Activated CD4-positive, alpha-beta T cell treated with anti-CD3 and anti-CD28 coated beads for 36 hours (primary cell): ENCODE measurements at regions of chr3 and their contacts with region 1.

Region 1: GRCh38 chr3:50550079-50550741 is 17.3 kb downstream of the C3orf18 start:
- DNase-seq: peak; percentile 83
- ATAC-seq: peak; percentile 78
- H3K4me3 Mint-ChIP-seq: no peak overlapping the region
- H3K27ac Mint-ChIP-seq: no peak overlapping the region
- H3K4me1 Mint-ChIP-seq: no peaks in the 10 kb centered on the region
- H3K27me3 Mint-ChIP-seq: no peaks in the 10 kb centered on the region

Region 2: DNA sequence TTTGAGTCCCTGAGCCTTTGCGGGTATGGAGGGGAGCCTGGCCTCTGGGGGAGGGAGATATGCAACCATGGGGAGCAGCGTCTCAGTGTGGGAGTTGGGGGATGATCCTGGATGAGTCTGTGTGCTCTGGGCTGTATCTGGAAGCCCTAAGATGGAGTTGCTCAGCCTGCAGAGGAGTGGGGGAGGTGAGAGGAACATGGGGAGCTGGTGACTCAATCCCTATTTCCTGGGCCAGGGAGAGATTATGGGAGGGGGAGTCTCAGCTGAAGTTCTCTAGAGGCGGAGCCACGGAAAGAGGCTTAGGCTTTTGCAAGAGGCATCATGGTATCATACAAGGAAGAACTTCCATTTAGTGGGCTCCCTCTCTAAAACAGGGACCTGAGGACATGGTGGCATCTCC is 131.4 kb before region 1 on chr3:
- CTCF ChIA-PET with region 1: no interaction called
- POLR2A ChIA-PET with region 1: no interaction called
- intact Hi-C with region 1: no loop called
- DNase-seq: no peak
- ATAC-seq: no peak
- H3K4me3 Mint-ChIP-seq: no peak overlapping the region
- H3K27ac Mint-ChIP-seq: no peak overlapping the region
- H3K4me1 Mint-ChIP-seq: no peaks in the 10 kb centered on the region
- H3K27me3 Mint-ChIP-seq: no peaks in the 10 kb centered on the region

Region 3: GRCh38 chr3:50436114-50436674 is 114.0 kb before region 1 on chr3:
- CTCF ChIA-PET with region 1: interaction called, 44 read pairs
- POLR2A ChIA-PET with region 1: no interaction called
- intact Hi-C with region 1: loop called in 1 of 2 experiments (anchors 1 kb)
- DNase-seq: peak; percentile 89
- ATAC-seq: peak; percentile 98
- H3K4me3 Mint-ChIP-seq: no peak overlapping the region
- H3K27ac Mint-ChIP-seq: no peak overlapping the region
- H3K4me1 Mint-ChIP-seq: no peaks in the 10 kb centered on the region
- H3K27me3 Mint-ChIP-seq: peaks cover 3% of the 10 kb centered on the region

Region 4: DNA sequence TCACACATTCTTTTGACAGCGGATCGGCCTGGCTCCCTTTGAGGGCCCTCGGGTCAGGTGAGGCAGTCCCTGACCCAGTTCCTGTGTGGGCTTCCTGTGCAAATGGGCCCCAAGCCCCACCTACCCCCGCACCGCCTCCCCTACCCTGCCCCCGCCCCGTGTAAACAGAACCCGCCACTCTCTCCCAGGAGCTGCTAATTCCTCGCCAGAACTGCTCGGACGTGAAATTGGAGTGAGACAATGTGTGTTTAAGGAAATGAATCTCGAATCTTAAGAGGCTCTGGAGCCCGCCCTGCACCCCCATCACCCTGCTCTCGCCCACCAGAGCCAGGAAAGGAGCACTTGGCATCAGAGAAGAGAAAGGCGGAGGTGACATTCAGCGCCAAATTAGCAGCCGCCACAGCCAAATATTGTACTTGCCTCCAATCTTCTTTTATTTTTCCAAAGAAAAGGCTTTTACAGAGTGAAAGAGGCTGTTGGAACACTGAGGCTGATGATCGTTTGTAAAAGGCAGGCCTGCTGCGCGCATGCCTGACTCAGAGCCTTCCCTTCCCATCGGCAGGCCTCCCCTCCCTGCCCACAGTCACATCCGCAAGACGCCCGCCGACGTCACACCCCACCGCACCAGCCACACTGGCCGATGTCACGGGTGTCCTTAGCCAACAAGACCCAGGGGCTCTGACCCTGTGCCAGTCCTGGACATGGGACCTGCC is 99.8 kb before region 1 on chr3:
- CTCF ChIA-PET with region 1: no interaction called
- POLR2A ChIA-PET with region 1: no interaction called
- intact Hi-C with region 1: no loop called
- DNase-seq: peak; percentile 86
- ATAC-seq: peak; percentile 95
- H3K4me3 Mint-ChIP-seq: peak overlapping the region; percentile 71
- H3K27ac Mint-ChIP-seq: peak overlapping the region; percentile 87
- H3K4me1 Mint-ChIP-seq: peaks cover 14% of the 10 kb centered on the region
- H3K27me3 Mint-ChIP-seq: no peaks in the 10 kb centered on the region

Region 5: GRCh38 chr3:51063053-51063452 is 512.8 kb after region 1 on chr3:
- CTCF ChIA-PET with region 1: no interaction called
- POLR2A ChIA-PET with region 1: no interaction called
- intact Hi-C with region 1: no loop called
- DNase-seq: no peak
- ATAC-seq: no peak
- H3K4me3 Mint-ChIP-seq: no peak overlapping the region
- H3K27ac Mint-ChIP-seq: no peak overlapping the region
- H3K4me1 Mint-ChIP-seq: no peaks in the 10 kb centered on the region
- H3K27me3 Mint-ChIP-seq: no peaks in the 10 kb centered on the region